ENCODE measurements at regions of chr10 and their contacts with region 1.

Region 1: DNA sequence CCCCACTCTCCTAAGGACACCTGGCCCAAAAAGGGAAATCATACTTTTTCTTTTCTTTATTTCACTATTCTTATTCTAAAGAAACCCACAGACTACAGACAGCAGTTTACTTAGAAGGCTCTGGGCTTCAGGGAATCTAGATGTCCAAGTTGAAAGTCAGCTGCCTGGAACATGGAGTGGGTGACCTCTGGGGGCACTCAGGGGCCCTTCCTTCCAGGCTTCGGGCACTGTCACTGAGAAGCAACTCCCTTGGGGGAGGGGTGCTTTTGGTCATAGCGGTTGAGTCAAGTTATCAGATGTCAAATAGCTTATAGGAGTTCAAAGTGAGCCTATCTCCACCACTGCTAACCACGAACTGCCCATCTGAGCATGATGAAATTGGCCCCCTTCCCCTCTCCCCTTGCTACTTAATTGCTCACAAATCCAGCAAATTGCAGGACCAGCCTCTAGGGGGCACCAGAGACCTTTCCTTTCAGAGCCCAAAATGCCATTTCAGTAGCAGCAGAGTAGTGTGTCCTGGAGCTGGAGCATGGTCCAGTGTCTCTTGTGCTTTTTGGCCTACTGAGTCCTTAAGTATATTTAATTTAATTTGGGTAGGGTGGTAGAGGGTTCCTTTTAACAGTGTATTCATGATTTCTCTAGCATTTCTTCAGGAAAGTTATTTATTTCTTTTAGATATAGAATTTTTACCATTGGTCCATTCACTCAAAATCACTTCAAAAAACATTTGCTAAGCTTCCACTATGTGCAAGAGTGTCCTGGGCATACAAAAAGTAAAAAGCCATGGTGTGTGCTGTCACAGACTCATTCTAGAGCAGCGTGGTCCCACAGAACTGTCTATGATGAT is 463.8 kb downstream of the KCNMA1 start:
- DNase-seq: peak; percentile 42 to 73
- ATAC-seq: peak; percentile 66 to 90
- H3K4me3 ChIP-seq: no peak overlapping the region
- H3K27ac ChIP-seq: no peak overlapping the region
- H3K4me1 ChIP-seq: peaks cover 6 to 8% of the 10 kb centered on the region in 2 donors
- H3K27me3 ChIP-seq: no peaks in the 10 kb centered on the region
- CTCF ChIP-seq: peak; percentile 88 to 94 (median 89)
- POLR2A ChIP-seq: no peak

Region 2: GRCh38 chr10:77391605-77392235 is 217.9 kb after region 1 on chr10:
- in situ Hi-C with region 1: loop called in 3 of 4 experiments (anchors 10 to 25 kb)
- intact Hi-C with region 1: loop called (anchors 5 kb)
- DNase-seq: peak; percentile 55 to 70
- ATAC-seq: peak; percentile 64 to 79
- H3K4me3 ChIP-seq: no peak overlapping the region
- H3K27ac ChIP-seq: peak overlapping the region; percentile 49 to 72 (median 65)
- H3K4me1 ChIP-seq: peaks cover 67 to 68% of the 10 kb centered on the region in 2 donors
- H3K27me3 ChIP-seq: no peaks in the 10 kb centered on the region
- CTCF ChIP-seq: peak; percentile 63 to 72 (median 70)
- POLR2A ChIP-seq: no peak

Region 3: DNA sequence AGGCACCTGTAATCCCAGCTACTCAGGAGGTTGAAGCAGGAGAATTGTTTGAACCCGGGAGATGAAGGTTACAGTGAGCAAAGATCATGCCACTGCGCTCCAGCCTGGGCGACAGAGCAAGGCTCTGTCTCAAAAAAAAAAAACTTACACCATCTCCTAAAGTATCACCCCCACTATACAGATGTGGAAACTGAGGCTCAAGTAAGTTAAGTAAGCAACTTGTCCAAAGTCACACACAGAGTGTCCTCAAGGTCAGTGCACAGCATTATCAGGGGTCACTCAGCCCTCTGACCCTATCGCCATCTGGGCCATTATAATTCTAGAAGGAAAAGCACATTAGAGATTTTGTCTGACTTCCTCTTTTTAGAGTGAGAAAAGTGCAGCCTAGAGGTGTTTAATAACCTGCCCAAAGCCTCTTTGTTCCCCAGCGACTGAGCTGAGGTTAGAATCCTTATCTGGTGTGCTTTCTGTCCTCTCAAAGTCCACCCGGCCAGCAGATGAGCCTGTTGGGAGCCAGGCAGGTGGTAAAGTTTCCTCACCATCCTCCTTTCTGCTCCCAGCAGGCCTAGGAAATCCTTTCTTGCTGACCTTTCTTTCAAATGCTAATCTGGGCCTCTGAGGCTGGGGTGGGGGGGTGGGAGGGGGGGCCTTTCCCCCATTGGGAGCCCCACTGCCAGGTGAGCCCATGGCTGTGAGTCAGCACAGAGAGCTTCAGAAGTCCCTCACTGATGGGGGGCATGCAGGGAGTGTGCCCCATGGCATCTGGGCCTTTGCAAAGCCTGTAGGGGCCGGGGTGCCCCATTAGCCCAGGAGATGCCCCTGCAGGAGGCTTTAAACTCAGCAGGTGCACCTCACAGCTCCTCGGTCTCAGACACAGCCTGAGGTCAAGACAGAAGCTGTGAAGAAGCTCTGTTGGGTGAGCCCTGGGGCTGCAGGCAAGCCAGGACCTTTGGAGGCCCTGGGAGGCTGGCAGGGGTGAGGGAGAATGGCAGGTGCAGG is 475.8 kb after region 1 on chr10:
- in situ Hi-C with region 1: loop called (anchors 5 to 10 kb)
- intact Hi-C with region 1: no loop called
- DNase-seq: no peak
- ATAC-seq: no peak
- H3K4me3 ChIP-seq: no peak overlapping the region
- H3K27ac ChIP-seq: no peak overlapping the region
- H3K4me1 ChIP-seq: no peaks in the 10 kb centered on the region
- H3K27me3 ChIP-seq: peaks cover 0 to 4% (median 0%) of the 10 kb centered on the region in 3 donors
- CTCF ChIP-seq: no peak
- POLR2A ChIP-seq: no peak

Measured in gastrocnemius medialis (tissue), 4 donors.